CD4-positive, alpha-beta memory T cell (primary cell): ENCODE measurements at regions of chr2 and their contacts with region 1.

Region 1: DNA sequence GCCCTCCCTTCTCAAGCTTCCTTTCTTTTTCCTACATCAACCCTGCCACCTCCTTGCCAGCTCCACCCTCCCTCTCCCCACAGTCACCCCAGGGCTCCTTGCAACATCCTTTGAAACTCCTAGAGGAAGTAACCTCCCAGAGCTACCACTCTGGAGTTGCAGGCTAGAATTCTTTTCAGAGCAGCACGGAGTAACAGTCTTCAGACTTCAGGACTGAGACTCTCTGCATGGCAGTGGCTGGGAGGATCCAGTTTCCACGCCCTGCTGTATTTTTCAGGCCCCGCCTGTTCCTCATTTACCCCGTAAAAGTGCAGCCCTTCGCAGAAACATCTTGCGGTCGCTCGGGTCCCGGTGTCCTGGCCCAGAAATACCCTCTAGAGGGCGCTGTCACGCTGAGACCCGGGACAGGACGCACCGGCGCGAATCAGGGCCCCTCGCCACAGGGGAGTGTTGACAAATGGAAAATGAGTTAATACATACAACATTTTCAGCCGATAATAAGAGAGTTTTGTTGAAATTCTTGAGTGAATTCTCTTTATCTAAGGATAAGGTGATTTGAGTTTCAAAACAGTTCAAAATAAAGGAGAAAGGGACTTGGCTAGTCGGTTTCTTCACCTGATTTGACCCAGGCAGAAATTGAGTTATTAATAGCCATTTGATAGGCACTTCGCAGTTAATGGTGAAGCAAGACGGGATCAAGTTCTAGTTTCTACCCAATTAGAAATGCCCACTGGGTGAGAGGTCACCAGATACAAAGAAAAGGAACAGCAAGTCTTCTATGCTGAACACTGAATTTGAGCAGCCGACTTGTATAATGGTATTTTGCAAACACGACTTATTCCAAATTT is 18.5 kb upstream of the NTSR2 start:
- DNase-seq: peak; percentile 69 to 75 (median 74)
- H3K4me3 ChIP-seq: no peak overlapping the region
- H3K4me3 Mint-ChIP-seq: peak overlapping the region in 7 of 8 donors; percentile 14 to 69 (median 51)
- H3K27ac ChIP-seq: no peak overlapping the region
- H3K27ac Mint-ChIP-seq: peak overlapping the region in 4 of 7 donors; percentile 13 to 74 (median 18)
- H3K4me1 ChIP-seq: peaks cover 11% of the 10 kb centered on the region
- H3K4me1 Mint-ChIP-seq: peaks cover 5 to 10% (median 9%) of the 10 kb centered on the region in 4 donors
- H3K27me3 ChIP-seq: no peaks in the 10 kb centered on the region
- H3K27me3 Mint-ChIP-seq: peaks cover 3 to 8% of the 10 kb centered on the region in 2 donors

Region 2: DNA sequence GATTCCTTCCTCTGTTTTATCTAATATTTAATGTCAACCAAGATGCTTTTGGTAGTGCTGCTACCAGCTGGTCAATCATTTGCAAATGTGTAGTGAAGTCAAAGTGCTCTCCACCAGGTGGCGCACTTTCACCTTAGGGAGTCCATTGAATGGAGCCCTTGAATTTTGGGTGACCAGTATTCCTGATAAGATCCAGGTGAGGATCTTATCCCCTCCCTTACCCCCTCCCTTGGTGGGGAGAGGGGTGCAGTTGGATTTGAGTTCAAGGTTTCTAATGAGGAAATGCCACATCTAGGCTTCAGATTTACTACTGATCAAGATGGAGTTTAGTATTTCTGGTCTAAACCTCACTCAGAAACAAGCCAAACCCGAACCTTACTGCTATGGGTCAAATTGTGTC is 210.5 kb before region 1 on chr2:
- CTCF ChIA-PET with region 1: interaction called, 4 read pairs
- POLR2A ChIA-PET with region 1: no interaction called
- intact Hi-C with region 1: loop called (anchors 10 kb)
- DNase-seq: peak; percentile 57 to 71 (median 63)
- H3K4me3 ChIP-seq: no peak overlapping the region
- H3K4me3 Mint-ChIP-seq: no peak overlapping the region
- H3K27ac ChIP-seq: no peak overlapping the region
- H3K27ac Mint-ChIP-seq: no peak overlapping the region
- H3K4me1 ChIP-seq: peaks cover under 1% of the 10 kb centered on the region
- H3K4me1 Mint-ChIP-seq: peaks cover under 1 to 5% (median 1%) of the 10 kb centered on the region in 4 donors
- H3K27me3 ChIP-seq: no peaks in the 10 kb centered on the region
- H3K27me3 Mint-ChIP-seq: peaks cover 12 to 17% of the 10 kb centered on the region in 2 donors

Region 3: DNA sequence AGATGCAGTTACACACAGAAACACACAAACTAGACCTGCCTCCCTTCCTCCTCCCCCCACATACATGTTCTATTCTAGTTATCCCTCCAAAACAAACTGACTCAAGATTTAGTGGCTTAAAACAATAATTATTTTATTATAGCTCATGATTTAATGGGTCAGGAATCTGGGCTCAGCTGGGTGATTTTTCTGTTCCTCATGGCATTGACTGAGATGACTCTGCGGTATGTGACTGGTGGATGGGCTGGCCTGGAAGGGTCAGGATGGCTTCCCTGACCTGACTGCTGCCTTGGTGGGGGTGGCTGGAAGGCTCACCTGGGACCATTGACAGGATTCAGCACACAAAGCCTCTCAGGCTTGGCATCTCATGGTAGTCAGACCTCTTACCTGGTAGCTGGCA is 15.3 kb after region 1 on chr2:
- CTCF ChIA-PET with region 1: interaction called, 12 read pairs
- POLR2A ChIA-PET with region 1: no interaction called
- intact Hi-C with region 1: no loop called
- DNase-seq: no peak
- H3K4me3 ChIP-seq: no peak overlapping the region
- H3K4me3 Mint-ChIP-seq: no peak overlapping the region
- H3K27ac ChIP-seq: no peak overlapping the region
- H3K27ac Mint-ChIP-seq: no peak overlapping the region
- H3K4me1 ChIP-seq: no peaks in the 10 kb centered on the region
- H3K4me1 Mint-ChIP-seq: no peaks in the 10 kb centered on the region
- H3K27me3 ChIP-seq: no peaks in the 10 kb centered on the region
- H3K27me3 Mint-ChIP-seq: peaks cover 1 to 2% of the 10 kb centered on the region in 2 donors

Region 4: GRCh38 chr2:11743846-11744553 is 55.6 kb after region 1 on chr2:
- CTCF ChIA-PET with region 1: interaction called, 41 read pairs
- POLR2A ChIA-PET with region 1: interaction called, 5 read pairs
- intact Hi-C with region 1: loop called (anchors 1 kb)
- DNase-seq: peak; percentile 59 to 91 (median 65)
- H3K4me3 ChIP-seq: peak overlapping the region; percentile 45 to 61
- H3K4me3 Mint-ChIP-seq: peak overlapping the region; percentile 49 to 92 (median 81)
- H3K27ac ChIP-seq: peak overlapping the region; percentile 48
- H3K27ac Mint-ChIP-seq: peak overlapping the region; percentile 71 to 98 (median 94)
- H3K4me1 ChIP-seq: peaks cover 56% of the 10 kb centered on the region
- H3K4me1 Mint-ChIP-seq: peaks cover 37 to 55% (median 44%) of the 10 kb centered on the region in 4 donors
- H3K27me3 ChIP-seq: no peaks in the 10 kb centered on the region
- H3K27me3 Mint-ChIP-seq: no peaks in the 10 kb centered on the region

Region 5: GRCh38 chr2:11753886-11754699 is 65.6 kb after region 1 on chr2:
- CTCF ChIA-PET with region 1: interaction called, 18 read pairs
- POLR2A ChIA-PET with region 1: interaction called, 6 read pairs
- intact Hi-C with region 1: no loop called
- DNase-seq: peak; percentile 39 to 88 (median 44)
- H3K4me3 ChIP-seq: peak overlapping the region; percentile 19 to 43
- H3K4me3 Mint-ChIP-seq: peak overlapping the region; percentile 78 to 92 (median 84)
- H3K27ac ChIP-seq: peak overlapping the region; percentile 70
- H3K27ac Mint-ChIP-seq: peak overlapping the region; percentile 91 to 98 (median 95)
- H3K4me1 ChIP-seq: peaks cover 95% of the 10 kb centered on the region
- H3K4me1 Mint-ChIP-seq: peaks cover 60 to 93% (median 78%) of the 10 kb centered on the region in 4 donors
- H3K27me3 ChIP-seq: no peaks in the 10 kb centered on the region
- H3K27me3 Mint-ChIP-seq: no peaks in the 10 kb centered on the region